Left lung (tissue), 14 donors: ENCODE measurements at regions of chr1 and their contacts with region 1.

Region 1: GRCh38 chr1:54499360-54500106 is 48.5 kb upstream of the ACOT11 start:
- DNase-seq: peak in 2 of 4 donors; percentile 46 to 67
- ATAC-seq: peak; percentile 86
- H3K4me3 ChIP-seq: peak overlapping the region; percentile 16 to 21
- H3K27ac ChIP-seq: no peak overlapping the region
- H3K4me1 ChIP-seq: peaks cover 8% of the 10 kb centered on the region in 2 donors
- H3K27me3 ChIP-seq: peaks cover 20 to 62% of the 10 kb centered on the region in 2 donors
- CTCF ChIP-seq: no peak

Region 2: DNA sequence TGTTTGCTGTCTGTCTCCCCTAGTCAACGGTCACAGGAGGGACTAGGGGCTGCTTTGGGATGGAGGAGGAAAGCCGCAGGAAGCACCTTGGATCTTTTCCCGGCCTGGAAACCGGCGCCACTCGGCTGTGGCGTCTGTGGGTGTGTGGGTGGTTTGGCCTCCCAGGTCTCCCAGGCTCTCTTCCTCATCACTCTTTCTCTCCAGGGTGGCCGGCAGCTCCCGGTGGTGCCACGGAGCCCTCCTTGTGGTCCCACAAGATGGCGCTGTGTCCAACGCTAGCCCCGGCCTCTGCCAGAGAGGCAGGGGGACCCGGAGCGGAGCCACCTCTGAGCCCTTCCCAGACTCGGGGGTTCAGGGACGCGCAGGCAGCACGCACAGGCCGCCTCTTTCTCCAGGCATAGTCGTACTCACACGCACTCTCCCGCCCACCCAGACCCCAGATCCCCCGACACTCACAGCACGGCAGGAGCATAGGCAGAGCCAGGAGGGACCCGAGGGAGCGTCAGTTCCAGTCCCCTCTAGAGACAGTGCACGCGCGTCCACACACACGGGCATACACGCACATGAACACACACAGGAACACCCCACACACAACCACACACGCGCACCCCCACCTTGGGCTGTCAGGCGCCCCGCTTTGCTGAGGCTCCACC is 377.9 kb before region 1 on chr1:
- intact Hi-C with region 1: loop called in 1 of 2 experiments (anchors 10 kb)
- DNase-seq: peak; percentile 75 to 88 (median 83)
- ATAC-seq: peak; percentile 94
- H3K4me3 ChIP-seq: no peak overlapping the region
- H3K27ac ChIP-seq: no peak overlapping the region
- H3K4me1 ChIP-seq: peaks cover 5 to 7% of the 10 kb centered on the region in 2 donors
- H3K27me3 ChIP-seq: peaks cover 0 to 21% of the 10 kb centered on the region in 2 donors
- CTCF ChIP-seq: peak; percentile 62 to 64

Region 3: GRCh38 chr1:54220004-54220811 is 279.3 kb before region 1 on chr1:
- intact Hi-C with region 1: no loop called
- DNase-seq: peak in 3 of 4 donors; percentile 38 to 69 (median 66)
- ATAC-seq: peak; percentile 62
- H3K4me3 ChIP-seq: no peak overlapping the region
- H3K27ac ChIP-seq: peak overlapping the region; percentile 10 to 69
- H3K4me1 ChIP-seq: peaks cover 4 to 23% of the 10 kb centered on the region in 2 donors
- H3K27me3 ChIP-seq: no peaks in the 10 kb centered on the region
- CTCF ChIP-seq: no peak